IMR-90 (cell line): ENCODE measurements at regions of chr13 and their contacts with region 1.

Region 1: GRCh38 chr13:98609756-98610155 is 32.8 kb upstream of the STK24 start:
- DNase-seq: no peak
- ATAC-seq: no peak
- H3K4me3 ChIP-seq: no peak overlapping the region
- H3K27ac ChIP-seq: no peak overlapping the region
- H3K4me1 ChIP-seq: no peaks in the 10 kb centered on the region
- H3K27me3 ChIP-seq: peaks cover 30% of the 10 kb centered on the region
- CTCF ChIP-seq: no peak
- POLR2A ChIP-seq: no peak
- RAD21 ChIP-seq: no peak

Region 2: DNA sequence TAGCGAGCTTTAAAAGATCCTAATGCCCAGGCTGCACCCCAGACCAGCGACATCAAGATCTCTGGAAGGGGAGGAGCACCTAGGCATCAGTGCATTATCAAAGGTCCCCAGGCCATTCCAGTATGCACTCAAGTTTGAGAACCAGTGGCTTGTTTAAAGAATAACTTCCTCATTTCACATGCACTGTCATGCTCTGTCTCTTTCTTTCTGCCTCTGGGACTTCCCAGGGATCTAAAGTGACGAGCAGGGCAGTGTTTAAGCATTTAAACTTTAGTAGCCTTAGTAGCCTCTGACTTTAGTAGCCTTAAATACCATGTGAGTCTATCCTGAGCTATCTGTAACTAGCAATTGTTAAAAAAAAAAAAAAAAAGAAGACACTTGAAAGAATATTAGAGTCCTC is 475.8 kb before region 1 on chr13:
- CTCF ChIA-PET with region 1: no interaction called
- POLR2A ChIA-PET with region 1: no interaction called
- dilution Hi-C with region 1: no loop called
- in situ Hi-C with region 1: no loop called
- intact Hi-C with region 1: loop called (anchors 5 kb)
- DNase-seq: no peak
- ATAC-seq: no peak
- H3K4me3 ChIP-seq: no peak overlapping the region
- H3K27ac ChIP-seq: no peak overlapping the region
- H3K4me1 ChIP-seq: peaks cover 2% of the 10 kb centered on the region; the same call in 1 of the 2 replicates
- H3K27me3 ChIP-seq: no peaks in the 10 kb centered on the region
- CTCF ChIP-seq: no peak
- POLR2A ChIP-seq: no peak
- RAD21 ChIP-seq: no peak

Region 3: DNA sequence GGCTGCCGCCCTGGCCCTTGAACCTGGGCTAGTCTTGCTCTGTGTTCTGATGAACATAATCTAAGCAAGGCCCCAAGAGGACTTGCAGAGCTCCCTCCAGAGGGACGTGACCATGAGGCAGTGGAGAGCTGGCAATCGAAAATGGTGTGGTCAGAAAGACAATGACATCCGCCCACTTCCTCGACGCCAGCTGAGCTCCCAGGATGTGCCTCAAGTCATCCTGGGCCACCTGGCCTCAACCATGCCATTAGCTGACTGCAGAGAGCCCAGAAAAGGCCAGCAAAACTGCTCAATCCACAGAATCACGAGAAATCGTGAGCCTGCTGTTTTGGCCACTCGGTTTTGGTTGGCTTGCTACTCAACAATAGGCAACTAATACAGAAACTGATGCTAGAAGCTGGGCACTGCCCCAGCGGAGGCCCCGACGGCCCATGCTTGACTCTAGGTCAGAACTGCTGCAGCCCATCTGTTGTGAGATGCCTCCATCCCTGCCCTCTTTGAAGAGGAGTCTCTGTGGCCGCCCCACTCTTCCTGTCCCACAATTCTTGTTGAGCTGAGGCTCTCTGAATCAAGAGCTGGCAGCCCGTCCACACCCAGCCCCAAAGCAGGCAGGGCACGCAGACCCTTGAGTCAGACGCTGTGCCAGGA is 86.2 kb before region 1 on chr13:
- CTCF ChIA-PET with region 1: no interaction called
- POLR2A ChIA-PET with region 1: no interaction called
- dilution Hi-C with region 1: no loop called
- in situ Hi-C with region 1: no loop called
- intact Hi-C with region 1: no loop called
- DNase-seq: no peak
- ATAC-seq: no peak
- H3K4me3 ChIP-seq: no peak overlapping the region
- H3K27ac ChIP-seq: no peak overlapping the region
- H3K4me1 ChIP-seq: peaks cover 18% of the 10 kb centered on the region
- H3K27me3 ChIP-seq: no peaks in the 10 kb centered on the region
- CTCF ChIP-seq: no peak
- POLR2A ChIP-seq: no peak
- RAD21 ChIP-seq: no peak